ENCODE measurements at regions of chr7 and their contacts with region 1.

Region 1: DNA sequence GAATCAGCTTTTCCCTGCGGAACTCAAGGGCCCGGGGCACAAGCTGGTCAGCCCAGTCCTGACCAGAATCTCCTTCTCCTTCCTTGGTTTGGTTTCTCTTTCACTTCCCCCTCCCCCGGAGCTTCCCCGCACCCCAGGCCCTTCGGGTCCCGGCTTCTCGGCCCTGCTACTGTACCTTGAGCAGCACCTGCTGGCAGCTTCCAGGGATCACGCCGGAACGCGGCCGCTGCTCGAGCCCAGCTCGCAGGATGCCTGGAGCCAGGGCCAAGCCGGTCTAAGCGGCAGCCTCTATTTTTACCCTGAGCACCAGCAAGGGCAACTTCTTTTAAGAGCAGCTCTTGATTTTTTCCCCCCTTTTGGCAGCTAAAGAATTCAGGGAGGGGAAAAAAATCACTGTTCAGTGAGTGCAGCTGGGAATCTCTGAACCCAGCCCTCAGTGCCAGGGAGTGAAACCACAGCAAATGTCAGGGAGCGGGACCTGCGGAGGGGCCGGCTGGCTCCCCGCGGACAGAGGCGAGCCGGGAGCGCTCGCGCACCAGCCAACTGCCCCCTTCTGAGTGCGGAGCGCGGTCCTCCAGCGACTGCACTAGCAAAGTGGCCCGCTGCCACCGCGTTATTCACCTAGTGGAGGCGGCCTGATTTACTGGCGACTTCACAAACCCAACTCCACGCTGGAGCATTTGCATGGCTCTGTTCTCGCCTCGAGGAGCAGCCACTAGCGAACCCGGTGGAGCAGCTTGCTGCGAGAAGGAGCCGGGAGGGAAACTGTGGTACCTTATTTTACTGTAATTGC is 2.4 kb upstream of the INHBA start:
- ATAC-seq: peak; percentile 92 to 96 (median 94)
- H3K4me3 ChIP-seq: peak overlapping the region; percentile 28 to 40 (median 33)
- H3K27ac ChIP-seq: no peak overlapping the region
- H3K4me1 ChIP-seq: peaks cover 14 to 17% of the 10 kb centered on the region in 2 donors

Region 2: GRCh38 chr7:40232242-40232893 is 1472.9 kb before region 1 on chr7:
- in situ Hi-C with region 1: loop called in 2 of 9 experiments (anchors 25 kb)
- ATAC-seq: peak; percentile 24 to 74 (median 59)
- H3K4me3 ChIP-seq: no peak overlapping the region
- H3K27ac ChIP-seq: no peak overlapping the region
- H3K4me1 ChIP-seq: no peaks in the 10 kb centered on the region

Region 3: DNA sequence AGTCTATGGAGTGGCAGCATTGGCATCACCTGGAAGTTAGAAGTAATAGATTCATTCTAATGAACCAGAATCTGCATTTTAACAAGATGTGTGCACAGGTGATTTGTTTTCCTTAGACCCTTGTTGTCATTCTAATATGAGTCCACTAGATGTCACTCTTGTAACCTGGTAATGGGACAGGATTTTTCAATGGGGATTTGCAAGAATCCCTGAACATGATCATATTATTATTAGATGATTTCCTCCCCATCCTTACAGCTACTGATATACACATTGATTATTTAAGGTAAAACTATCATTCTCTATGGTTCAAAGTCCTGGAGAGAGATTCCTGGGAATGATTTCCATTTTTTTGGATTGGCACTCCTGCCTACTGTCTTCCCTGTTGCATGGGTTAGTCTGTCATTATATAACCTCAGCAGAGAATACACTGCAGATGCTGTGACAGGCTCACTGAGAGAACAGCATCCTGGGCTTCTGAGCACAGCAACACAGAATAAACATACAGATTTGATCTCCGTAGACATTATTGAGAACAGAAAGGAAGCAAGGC is 1375.6 kb before region 1 on chr7:
- in situ Hi-C with region 1: loop called in 3 of 9 experiments (anchors 25 kb)
- ATAC-seq: peak in 5 of 8 experiments; percentile 71 to 90 (median 80)
- H3K4me3 ChIP-seq: no peak overlapping the region
- H3K27ac ChIP-seq: no peak overlapping the region
- H3K4me1 ChIP-seq: peaks cover 0 to 5% of the 10 kb centered on the region in 2 donors

Region 4: DNA sequence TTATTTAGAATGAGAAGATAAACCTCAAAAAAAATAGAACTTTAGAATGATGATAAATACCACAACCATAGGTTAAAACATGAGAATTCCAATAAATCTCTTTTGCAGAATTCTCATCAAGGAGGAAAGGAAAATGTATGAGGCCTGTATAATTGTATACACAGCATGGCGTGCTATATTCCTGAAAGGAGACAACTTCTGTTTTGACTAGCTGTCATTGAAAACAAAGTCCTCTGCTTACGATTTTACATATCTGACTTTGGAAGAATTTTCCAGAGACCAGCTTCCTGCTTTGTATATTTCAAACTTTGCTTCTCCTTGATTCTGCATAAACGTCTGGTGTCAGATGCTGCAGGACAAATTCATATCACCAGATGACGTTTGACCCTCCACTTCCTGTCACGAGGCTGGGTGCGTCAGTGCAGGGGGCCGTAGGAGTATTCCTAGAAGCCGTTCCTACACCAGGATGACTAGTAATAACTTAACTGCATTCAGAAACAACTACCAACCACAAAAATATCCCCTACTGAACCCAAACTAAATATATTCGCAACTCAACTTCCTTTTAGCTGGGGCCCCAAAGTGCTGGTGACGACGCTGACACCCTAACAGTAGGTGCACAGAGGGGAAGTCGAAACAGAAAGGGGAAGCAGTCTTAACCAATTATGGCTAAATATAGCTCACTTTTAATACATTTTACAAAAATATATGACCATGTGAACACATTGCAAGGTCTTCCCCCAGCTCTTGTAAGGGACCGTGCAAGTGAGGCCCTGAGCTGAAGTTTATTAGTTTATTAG is 176.2 kb after region 1 on chr7:
- in situ Hi-C with region 1: no loop called
- ATAC-seq: no peak
- H3K4me3 ChIP-seq: no peak overlapping the region
- H3K27ac ChIP-seq: no peak overlapping the region
- H3K4me1 ChIP-seq: no peaks in the 10 kb centered on the region